ENCODE measurements at regions of chr4 and their contacts with region 1.

Region 1: DNA sequence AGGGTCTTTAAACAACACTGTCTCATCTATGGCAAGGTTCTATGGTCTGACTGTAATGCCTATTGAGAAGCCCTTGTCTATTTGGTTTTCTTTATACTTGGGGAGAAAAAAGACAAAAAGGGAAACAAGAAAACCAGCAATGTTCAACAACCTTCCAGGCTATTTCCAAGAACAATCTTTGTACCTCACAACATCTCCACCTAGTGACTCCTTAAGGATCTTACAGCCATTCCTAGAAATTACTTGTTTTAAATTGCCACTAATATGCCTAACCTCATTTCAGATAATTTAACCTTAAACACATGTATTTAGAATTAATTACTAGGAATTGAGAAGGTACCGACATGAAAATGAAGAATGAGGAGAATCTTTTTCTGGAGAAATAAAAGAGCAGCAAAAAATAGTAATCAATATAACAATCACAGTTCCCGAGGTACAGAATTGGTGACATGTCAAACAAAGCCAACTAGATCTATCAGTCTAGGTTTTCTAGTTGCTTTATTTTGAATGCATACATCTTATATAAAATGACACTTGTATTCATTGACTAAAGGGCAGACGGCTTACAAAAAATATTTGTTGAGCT is 1.6 kb upstream of the RBM46 start:
- DNase-seq: peak; percentile 1
- H3K4me3 ChIP-seq: no peak overlapping the region
- H3K27ac ChIP-seq: no peak overlapping the region
- H3K4me1 ChIP-seq: no peaks in the 10 kb centered on the region
- CTCF ChIP-seq: peak; percentile 66

Region 2: GRCh38 chr4:154822775-154823174 is 43.3 kb after region 1 on chr4:
- CTCF ChIA-PET with region 1: no interaction called
- POLR2A ChIA-PET with region 1: no interaction called
- intact Hi-C with region 1: no loop called
- DNase-seq: no peak
- H3K4me3 ChIP-seq: no peak overlapping the region
- H3K27ac ChIP-seq: no peak overlapping the region
- H3K4me1 ChIP-seq: no peaks in the 10 kb centered on the region
- CTCF ChIP-seq: no peak

Region 3: GRCh38 chr4:156665780-156666366 is 1886.4 kb after region 1 on chr4:
- CTCF ChIA-PET with region 1: no interaction called
- POLR2A ChIA-PET with region 1: interaction called, 10 read pairs
- intact Hi-C with region 1: no loop called
- DNase-seq: no peak
- H3K4me3 ChIP-seq: no peak overlapping the region
- H3K27ac ChIP-seq: no peak overlapping the region
- H3K4me1 ChIP-seq: no peaks in the 10 kb centered on the region
- CTCF ChIP-seq: no peak